Activated naive CD4-positive, alpha-beta T cell treated with anti-CD3 and anti-CD28 coated beads for 36 hours (primary cell): ENCODE measurements at regions of chr16 and their contacts with region 1.

Region 1: DNA sequence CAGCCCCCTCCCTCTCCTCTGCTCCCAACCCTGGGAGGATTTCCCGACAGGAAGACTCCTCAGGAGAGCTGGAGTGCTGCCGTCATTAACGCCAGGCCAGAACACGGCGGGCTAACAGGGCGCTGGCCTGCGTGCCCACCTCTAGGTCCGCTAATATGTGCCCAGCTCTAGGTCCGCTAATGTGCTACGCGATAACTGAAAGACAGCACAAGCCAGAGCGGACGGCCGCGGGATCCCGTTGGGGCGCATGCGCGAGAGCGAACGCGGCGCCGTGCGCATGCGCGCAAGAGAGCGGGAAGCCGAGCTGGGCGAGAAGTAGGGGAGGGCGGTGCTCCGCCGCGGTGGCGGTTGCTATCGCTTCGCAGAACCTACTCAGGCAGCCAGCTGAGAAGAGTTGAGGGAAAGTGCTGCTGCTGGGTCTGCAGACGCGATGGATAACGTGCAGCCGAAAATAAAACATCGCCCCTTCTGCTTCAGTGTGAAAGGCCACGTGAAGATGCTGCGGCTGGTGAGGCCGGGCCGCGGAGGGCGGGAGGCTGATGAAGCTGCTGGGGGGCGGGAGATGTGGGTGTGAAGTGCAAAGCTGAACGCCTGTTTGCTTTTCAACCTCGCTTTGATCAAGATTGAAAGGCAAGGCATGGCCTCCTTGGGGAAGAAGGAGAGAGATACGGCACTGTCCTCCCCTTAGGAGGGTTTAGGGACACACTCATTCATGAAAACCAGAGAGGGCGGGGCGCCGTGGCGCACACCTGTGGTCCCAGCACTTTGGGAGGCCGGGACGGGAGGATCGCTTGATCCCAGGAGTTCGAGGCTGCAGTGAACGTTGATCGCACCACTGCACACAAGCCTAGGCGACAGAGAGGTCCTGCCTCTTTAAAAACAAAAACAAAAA is at the start of gene CKLF:
- DNase-seq: peak; percentile 90
- H3K4me3 Mint-ChIP-seq: peak within 1 kb of the TSS; percentile 87
- H3K27ac Mint-ChIP-seq: peak within 1 kb of the TSS; percentile 95
- H3K4me1 Mint-ChIP-seq: peaks cover 60% of the 10 kb centered on the region
- H3K27me3 Mint-ChIP-seq: no peaks in the 10 kb centered on the region
- total RNA-seq, gene CKLF: 114 to 126 TPM

Region 2: GRCh38 chr16:66474750-66475199 is 77.8 kb before region 1 on chr16:
- CTCF ChIA-PET with region 1: interaction called, 5 read pairs
- intact Hi-C with region 1: loop called (anchors 2 kb)
- DNase-seq: peak; percentile 73
- H3K4me3 Mint-ChIP-seq: no peak overlapping the region
- H3K27ac Mint-ChIP-seq: peak overlapping the region; percentile 1
- H3K4me1 Mint-ChIP-seq: peaks cover 24% of the 10 kb centered on the region
- H3K27me3 Mint-ChIP-seq: no peaks in the 10 kb centered on the region

Region 3: DNA sequence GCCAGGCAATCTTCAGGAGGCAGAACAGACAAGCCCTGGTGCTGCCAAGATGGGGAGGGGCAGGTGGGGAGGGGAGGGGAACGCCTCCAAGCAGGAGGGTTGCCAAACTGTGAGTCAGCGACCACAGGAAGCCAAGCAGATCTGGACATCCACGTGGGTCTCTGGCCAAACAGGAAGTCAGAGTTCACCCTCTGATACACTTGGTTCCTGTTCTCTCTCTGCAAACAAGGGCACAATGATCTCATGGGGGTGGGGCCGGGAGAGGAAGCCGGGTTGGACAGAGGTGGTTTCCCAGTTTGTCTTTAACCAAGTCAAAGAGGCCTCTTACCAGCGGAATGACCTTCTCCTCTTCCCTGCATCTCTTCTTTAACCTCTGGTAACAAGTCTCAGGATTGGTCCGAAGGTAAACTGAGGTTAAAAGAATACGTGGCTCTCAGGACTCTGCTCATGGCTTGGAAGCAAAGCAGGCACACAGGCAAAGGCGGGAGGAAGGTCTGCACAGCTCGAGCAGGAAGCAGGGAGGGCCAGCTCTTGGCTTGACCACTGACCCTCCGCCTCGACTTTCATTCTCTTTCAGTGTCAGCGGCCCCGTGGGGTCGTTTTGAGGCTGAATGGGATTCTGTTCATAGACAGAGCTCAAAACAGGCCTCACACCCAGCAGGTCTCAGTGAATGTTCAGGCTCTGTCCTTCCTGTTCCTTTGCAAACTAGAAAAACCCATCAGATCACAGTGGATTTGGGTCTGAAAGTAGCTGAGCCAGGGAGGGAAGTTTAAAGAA is 35.5 kb before region 1 on chr16:
- CTCF ChIA-PET with region 1: interaction called, 23 read pairs
- intact Hi-C with region 1: loop called (anchors 1 kb)
- DNase-seq: peak; percentile 96
- H3K4me3 Mint-ChIP-seq: peak overlapping the region; percentile 68
- H3K27ac Mint-ChIP-seq: peak overlapping the region; percentile 93
- H3K4me1 Mint-ChIP-seq: peaks cover 60% of the 10 kb centered on the region
- H3K27me3 Mint-ChIP-seq: no peaks in the 10 kb centered on the region

Region 4: GRCh38 chr16:66608241-66609138 is 56.0 kb after region 1 on chr16:
- CTCF ChIA-PET with region 1: interaction called, 9 read pairs
- intact Hi-C with region 1: loop called (anchors 1 kb)
- DNase-seq: peak; percentile 89
- H3K4me3 Mint-ChIP-seq: no peak overlapping the region
- H3K27ac Mint-ChIP-seq: no peak overlapping the region
- H3K4me1 Mint-ChIP-seq: peaks cover 33% of the 10 kb centered on the region
- H3K27me3 Mint-ChIP-seq: no peaks in the 10 kb centered on the region

Region 5: GRCh38 chr16:66751303-66751991 is 198.9 kb after region 1 on chr16 and contains the start of gene DYNC1LI2:
- CTCF ChIA-PET with region 1: no interaction called
- intact Hi-C with region 1: loop called (anchors 1 kb)
- DNase-seq: peak; percentile 82
- H3K4me3 Mint-ChIP-seq: peak within 1 kb of the TSS; percentile 88
- H3K27ac Mint-ChIP-seq: peak within 1 kb of the TSS; percentile 78
- H3K4me1 Mint-ChIP-seq: peaks cover 36% of the 10 kb centered on the region
- H3K27me3 Mint-ChIP-seq: peaks cover 3% of the 10 kb centered on the region
- total RNA-seq, gene DYNC1LI2: 30.8 to 31.0 TPM